ENCODE measurements at regions of chr2 and their contacts with region 1.

Region 1: DNA sequence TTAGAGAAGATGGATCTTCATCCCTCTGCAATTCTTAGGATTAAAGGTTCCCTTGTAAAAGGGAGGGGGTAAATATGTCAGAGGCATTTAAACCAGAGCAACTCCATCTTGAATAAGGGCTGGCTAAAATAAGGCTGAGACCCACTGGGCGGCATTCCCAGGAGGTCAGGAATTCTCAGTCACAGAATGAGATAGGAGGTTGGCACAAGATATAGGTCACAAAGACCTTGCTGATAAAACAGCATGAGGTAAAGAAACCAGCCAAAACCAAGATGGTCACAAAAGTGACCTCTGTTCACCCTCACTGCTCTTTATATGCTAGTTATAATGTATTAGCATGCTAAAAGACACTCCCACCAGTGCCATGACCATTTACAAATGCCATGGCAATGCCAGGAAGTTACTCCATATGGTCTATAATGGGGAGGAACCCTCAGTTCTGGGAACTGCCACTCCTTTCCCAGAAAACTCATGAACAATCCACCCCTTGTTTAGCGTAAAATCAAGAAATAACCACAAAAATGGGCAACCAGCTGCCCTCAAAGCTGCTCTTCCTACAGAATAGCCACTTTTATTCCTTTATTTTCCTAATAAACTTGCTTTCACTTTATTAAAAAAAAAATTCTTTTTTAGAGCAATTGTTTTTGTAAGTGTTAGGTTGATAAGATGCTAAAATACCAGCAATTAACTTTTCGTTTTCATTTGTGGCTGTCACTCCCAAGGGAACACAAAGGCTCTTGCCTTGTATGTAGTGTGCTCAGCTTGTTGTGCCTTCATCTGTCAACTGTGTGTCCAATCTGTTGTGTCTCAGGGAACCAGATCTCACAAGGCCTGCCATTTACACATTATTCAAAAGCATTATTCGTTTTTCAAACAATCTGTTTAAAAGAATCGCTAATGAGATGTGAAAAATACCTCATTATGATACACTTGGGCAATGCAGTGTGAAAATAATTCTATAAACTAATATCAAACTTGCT is 205.2 kb upstream of the RGPD4 start:
- DNase-seq: peak; percentile 40
- ATAC-seq: peak; percentile 57 to 58

Region 2: DNA sequence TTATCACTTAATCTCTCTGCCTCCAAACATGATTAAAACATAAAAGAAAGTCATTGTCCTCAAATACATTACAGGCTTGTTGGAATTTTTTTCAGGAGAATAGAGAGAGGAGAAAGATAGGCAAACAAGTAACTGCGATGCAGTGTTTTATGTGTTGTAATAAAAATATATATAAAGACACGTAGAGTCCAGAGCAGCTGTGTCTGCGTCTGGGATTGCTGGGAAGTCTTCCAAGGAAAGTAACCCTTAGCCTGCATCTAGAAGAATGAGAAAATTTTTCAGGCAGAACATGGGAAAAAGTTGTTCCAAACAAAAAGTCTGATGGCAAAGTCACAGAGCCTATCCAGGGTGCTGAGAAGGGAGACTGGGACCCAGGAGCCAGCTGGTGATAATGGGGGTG is 643.8 kb before region 1 on chr2:
- intact Hi-C with region 1: no loop called
- DNase-seq: no peak
- ATAC-seq: peak; percentile 23 to 29

Region 3: GRCh38 chr2:107700056-107700455 is 78.6 kb after region 1 on chr2:
- intact Hi-C with region 1: loop called in 1 of 2 experiments (anchors 2 kb)
- DNase-seq: no peak
- ATAC-seq: no peak